Activated B cell treated with CpG ODN at 0.5 μM for 24 hours (primary cell): ENCODE measurements at regions of chr15 and their contacts with region 1.

Region 1: GRCh38 chr15:52331490-52332240 is 36.1 kb upstream of the MYO5C start:
- DNase-seq: no peak
- ATAC-seq: peak; percentile 99
- H3K4me3 Mint-ChIP-seq: no peak overlapping the region
- H3K27ac Mint-ChIP-seq: peak overlapping the region; percentile 15
- H3K4me1 Mint-ChIP-seq: peaks cover 13% of the 10 kb centered on the region
- H3K27me3 Mint-ChIP-seq: no peaks in the 10 kb centered on the region
- CTCF ChIP-seq: no peak

Region 2: DNA sequence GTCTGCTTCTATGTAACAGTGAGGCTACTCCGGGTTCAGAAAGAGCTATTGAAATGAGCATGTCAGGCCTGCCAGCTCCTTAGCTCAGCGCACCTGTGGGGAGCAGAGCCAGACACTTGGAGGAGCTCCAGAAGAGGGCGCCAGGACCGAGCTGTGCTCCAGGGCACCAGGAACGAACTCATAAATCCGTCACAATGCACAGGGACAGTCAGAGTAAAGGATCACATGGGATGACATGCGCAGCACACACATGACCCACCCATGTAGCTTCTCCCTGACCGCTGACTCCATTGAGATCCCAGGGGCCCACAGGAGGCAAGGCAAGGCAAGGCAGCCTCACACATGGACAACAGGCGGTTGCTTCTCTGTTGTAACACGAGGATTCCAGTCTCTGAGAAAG is 114.5 kb before region 1 on chr15:
- CTCF ChIA-PET with region 1: no interaction called
- POLR2A ChIA-PET with region 1: interaction called, 11 read pairs
- intact Hi-C with region 1: no loop called
- DNase-seq: no peak
- ATAC-seq: peak; percentile 33
- H3K4me3 Mint-ChIP-seq: no peak overlapping the region
- H3K27ac Mint-ChIP-seq: no peak overlapping the region
- H3K4me1 Mint-ChIP-seq: peaks cover 35% of the 10 kb centered on the region
- H3K27me3 Mint-ChIP-seq: no peaks in the 10 kb centered on the region
- CTCF ChIP-seq: no peak

Region 3: DNA sequence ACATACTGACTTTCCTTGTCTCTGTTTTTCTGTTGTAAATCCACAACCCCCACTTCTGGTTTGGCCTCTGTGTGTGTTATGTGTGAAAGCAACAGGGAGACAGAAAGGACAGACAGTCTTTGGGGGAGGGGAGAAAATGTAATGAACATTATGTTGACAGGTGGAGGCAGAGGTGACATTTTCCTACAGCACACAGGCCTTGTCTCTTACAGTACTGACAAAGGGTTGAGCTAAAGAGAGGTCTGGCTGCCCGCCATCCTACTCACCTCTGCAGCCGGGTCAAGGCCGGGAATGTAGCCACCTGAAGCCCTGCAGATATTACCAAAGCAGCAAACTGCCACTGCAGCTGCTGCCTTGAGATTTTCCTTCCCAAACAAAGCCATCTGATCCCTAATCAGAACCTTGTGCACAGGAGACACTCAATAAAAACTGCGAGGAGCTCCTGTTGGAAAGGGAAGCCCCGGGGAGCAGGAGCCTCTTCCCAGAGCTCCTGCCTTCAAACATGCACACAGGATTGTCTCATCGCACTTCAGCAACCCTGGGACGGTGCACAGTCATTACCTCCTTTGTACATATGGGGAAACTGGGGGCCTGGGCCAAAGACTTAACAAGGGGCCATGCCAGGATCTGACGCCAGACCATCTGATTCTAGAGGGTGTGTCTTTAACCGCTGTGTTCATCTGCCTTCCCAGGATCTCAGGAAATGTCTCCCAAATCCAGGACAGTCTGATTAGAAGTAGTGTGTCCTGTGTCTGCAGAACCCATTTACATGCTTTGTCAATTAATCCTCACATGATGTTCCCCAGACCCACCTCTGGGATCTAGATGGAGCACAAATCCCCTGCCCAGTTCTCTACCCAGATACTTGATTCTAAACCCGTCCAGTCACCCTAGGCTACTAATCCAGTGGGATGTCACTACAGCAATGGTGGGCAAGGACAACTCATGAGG is 50.3 kb before region 1 on chr15:
- CTCF ChIA-PET with region 1: no interaction called
- POLR2A ChIA-PET with region 1: no interaction called
- intact Hi-C with region 1: no loop called
- DNase-seq: no peak
- ATAC-seq: no peak
- H3K4me3 Mint-ChIP-seq: no peak overlapping the region
- H3K27ac Mint-ChIP-seq: no peak overlapping the region
- H3K4me1 Mint-ChIP-seq: no peaks in the 10 kb centered on the region
- H3K27me3 Mint-ChIP-seq: no peaks in the 10 kb centered on the region
- CTCF ChIP-seq: no peak

Region 4: GRCh38 chr15:52609593-52609992 is 277.9 kb after region 1 on chr15:
- CTCF ChIA-PET with region 1: no interaction called
- POLR2A ChIA-PET with region 1: no interaction called
- intact Hi-C with region 1: loop called (anchors 5 kb)
- DNase-seq: no peak
- ATAC-seq: no peak
- H3K4me3 Mint-ChIP-seq: no peak overlapping the region
- H3K27ac Mint-ChIP-seq: no peak overlapping the region
- H3K4me1 Mint-ChIP-seq: peaks cover 20% of the 10 kb centered on the region
- H3K27me3 Mint-ChIP-seq: no peaks in the 10 kb centered on the region
- CTCF ChIP-seq: no peak